ENCODE measurements at regions of chr12 and their contacts with region 1.

Region 1: GRCh38 chr12:66296171-66296683 is 6.1 kb upstream of the HELB start:
- DNase-seq: no peak
- ATAC-seq: no peak
- H3K4me3 ChIP-seq: no peak overlapping the region
- H3K27ac ChIP-seq: no peak overlapping the region
- H3K4me1 ChIP-seq: peaks cover 0 to 2% (median under 1%) of the 10 kb centered on the region in 12 donors
- H3K27me3 ChIP-seq: peaks cover 0 to 8% (median 0%) of the 10 kb centered on the region in 9 donors
- CTCF ChIP-seq: no peak
- POLR2A ChIP-seq: no peak

Region 2: DNA sequence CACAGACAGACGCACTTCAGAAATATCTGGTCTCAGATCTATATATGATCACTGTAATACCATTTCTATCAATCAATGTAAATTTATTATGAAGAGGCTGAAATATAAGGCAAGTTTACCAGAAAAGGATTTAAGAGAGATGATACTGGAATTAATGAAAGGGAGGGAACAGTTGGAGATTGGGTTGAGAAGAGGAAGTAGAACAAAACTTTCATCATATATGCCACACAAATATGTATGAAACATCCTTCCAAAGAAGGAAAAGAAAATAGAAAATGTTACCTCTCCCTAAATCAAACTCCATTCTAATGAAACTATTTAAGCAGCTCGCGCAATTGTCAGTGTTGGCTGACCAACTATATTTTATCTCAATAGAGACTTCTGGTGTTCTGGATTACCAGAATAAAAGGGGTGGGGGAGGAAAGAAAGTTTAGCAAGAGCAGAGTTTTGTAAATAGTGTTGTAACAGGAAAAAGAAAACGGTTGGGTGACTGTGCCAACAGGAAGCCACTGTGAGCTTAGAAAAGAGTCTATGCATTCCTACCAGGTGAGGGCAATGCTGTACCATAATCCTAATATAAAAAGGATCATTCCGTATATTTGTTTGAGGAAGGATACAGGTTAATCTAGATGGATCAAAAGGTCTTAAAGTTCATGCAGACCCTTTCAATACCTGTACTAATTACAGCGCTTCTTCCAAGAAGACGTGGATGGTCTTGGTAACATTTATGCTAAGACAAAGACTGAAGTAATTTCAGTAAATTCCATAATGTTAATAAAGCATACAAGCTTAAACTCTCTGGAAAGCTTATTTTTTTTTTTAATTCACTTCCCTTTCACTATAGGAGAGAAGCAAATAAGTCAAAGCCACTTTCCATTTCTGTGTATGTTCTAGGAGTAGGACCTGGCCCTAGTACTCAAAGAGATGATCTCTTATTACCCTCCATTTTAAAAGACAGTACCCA is 151.2 kb before region 1 on chr12:
- intact Hi-C with region 1: loop called in 3 of 10 experiments (anchors 5 to 10 kb)
- DNase-seq: peak in 2 of 5 donors; percentile 32 to 46
- ATAC-seq: peak; percentile 56 to 86 (median 84)
- H3K4me3 ChIP-seq: no peak overlapping the region
- H3K27ac ChIP-seq: peak overlapping the region in 11 of 12 donors; percentile 20 to 80 (median 62)
- H3K4me1 ChIP-seq: peaks cover 3 to 42% (median 19%) of the 10 kb centered on the region in 12 donors
- H3K27me3 ChIP-seq: no peaks in the 10 kb centered on the region
- CTCF ChIP-seq: peak in 11 of 12 donors; percentile 45 to 77 (median 68)
- POLR2A ChIP-seq: no peak

Region 3: GRCh38 chr12:66345212-66345611 is 49.0 kb after region 1 on chr12:
- intact Hi-C with region 1: no loop called
- DNase-seq: no peak
- ATAC-seq: no peak
- H3K4me3 ChIP-seq: no peak overlapping the region
- H3K27ac ChIP-seq: no peak overlapping the region
- H3K4me1 ChIP-seq: no peaks in the 10 kb centered on the region
- H3K27me3 ChIP-seq: no peaks in the 10 kb centered on the region
- CTCF ChIP-seq: no peak
- POLR2A ChIP-seq: no peak

Region 4: DNA sequence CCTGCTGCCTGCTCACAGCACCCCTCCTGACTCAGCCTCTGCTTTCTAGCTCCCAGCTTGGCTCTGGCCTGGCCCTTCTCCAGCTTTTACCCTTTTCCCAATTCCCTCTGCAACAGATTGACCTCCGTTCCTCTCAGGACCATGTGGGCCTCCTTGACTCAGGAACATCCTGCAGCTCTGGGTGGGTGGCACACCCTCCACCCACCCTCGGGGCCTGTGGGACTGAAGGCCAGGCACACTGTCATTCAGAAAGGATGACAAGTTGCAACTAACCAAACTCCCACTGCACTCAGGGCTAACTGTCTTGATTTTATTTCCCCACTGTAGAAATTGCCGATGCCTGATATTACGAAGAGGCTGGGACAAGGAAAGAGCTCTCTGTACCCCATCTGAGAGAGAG is 65.5 kb after region 1 on chr12:
- intact Hi-C with region 1: no loop called
- DNase-seq: no peak
- ATAC-seq: no peak
- H3K4me3 ChIP-seq: no peak overlapping the region
- H3K27ac ChIP-seq: no peak overlapping the region
- H3K4me1 ChIP-seq: peaks cover 0 to 7% (median 0%) of the 10 kb centered on the region in 12 donors
- H3K27me3 ChIP-seq: no peaks in the 10 kb centered on the region
- CTCF ChIP-seq: no peak
- POLR2A ChIP-seq: no peak